HCT116 (cell line): ENCODE measurements at regions of chr17 and their contacts with region 1.

Region 1: GRCh38 chr17:62703775-62704378 is 76.4 kb downstream of the MRC2 start:
- DNase-seq: no peak
- ATAC-seq: peak; percentile 93
- H3K4me3 ChIP-seq: peak overlapping the region; percentile 48 to 63
- H3K27ac ChIP-seq: peak overlapping the region; percentile 39; the same call in 1 of the 2 replicates
- H3K4me1 ChIP-seq: peaks cover 18 to 32% of the 10 kb centered on the region in 2 experiments
- H3K27me3 ChIP-seq: no peaks in the 10 kb centered on the region
- CTCF ChIP-seq: peak; percentile 76 to 94 (median 91)
- POLR2A ChIP-seq: no peak
- RAD21 ChIP-seq: peak; percentile 97

Region 2: GRCh38 chr17:62653826-62654761 is 49.8 kb before region 1 on chr17:
- CTCF ChIA-PET with region 1: no interaction called
- POLR2A ChIA-PET with region 1: no interaction called
- RAD21 ChIA-PET with region 1: no interaction called
- intact Hi-C with region 1: no loop called
- DNase-seq: no peak
- ATAC-seq: no peak
- H3K4me3 ChIP-seq: no peak overlapping the region
- H3K27ac ChIP-seq: no peak overlapping the region
- H3K4me1 ChIP-seq: peaks cover 0 to 7% of the 10 kb centered on the region in 2 experiments; a peak in 1 of 4 replicates
- H3K27me3 ChIP-seq: no peaks in the 10 kb centered on the region
- CTCF ChIP-seq: no peak
- POLR2A ChIP-seq: no peak
- RAD21 ChIP-seq: no peak

Region 3: DNA sequence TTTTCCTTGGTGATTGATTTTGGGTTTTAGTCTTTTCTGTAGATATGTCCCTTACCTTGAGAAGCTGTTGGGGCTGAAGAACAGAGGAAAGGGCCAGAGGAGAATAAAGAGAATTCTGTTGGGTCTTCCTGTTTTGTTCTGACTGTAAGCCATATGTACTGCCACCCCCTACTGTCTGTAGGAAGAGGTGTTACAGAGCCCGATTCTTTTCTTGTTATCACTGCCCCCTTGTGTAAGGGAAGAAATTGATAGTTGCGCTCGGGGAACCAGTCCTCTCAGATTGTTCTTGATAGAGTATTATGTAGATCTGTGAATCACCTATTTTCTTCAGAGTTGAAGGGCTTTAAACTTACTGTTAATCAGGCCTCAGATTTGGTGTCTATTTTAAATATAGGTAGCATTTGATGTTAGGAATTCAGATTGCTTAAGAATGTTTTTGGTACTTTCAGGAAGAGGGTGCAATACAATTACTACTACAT is 264.6 kb after region 1 on chr17:
- CTCF ChIA-PET with region 1: no interaction called
- POLR2A ChIA-PET with region 1: no interaction called
- RAD21 ChIA-PET with region 1: no interaction called
- intact Hi-C with region 1: loop called (anchors 1 kb)
- DNase-seq: peak; percentile 83
- ATAC-seq: peak; percentile 63
- H3K4me3 ChIP-seq: peak overlapping the region in 1 of 2 experiments; percentile 18; a peak in 1 of 4 replicates
- H3K27ac ChIP-seq: no peak overlapping the region
- H3K4me1 ChIP-seq: peaks cover 13 to 38% of the 10 kb centered on the region in 2 experiments
- H3K27me3 ChIP-seq: no peaks in the 10 kb centered on the region
- CTCF ChIP-seq: peak; percentile 97 to 100 (median 99)
- POLR2A ChIP-seq: no peak
- RAD21 ChIP-seq: peak; percentile 99

Region 4: GRCh38 chr17:62995377-62995885 is 291.6 kb after region 1 on chr17:
- CTCF ChIA-PET with region 1: interaction called, 5 read pairs
- POLR2A ChIA-PET with region 1: no interaction called
- RAD21 ChIA-PET with region 1: no interaction called
- intact Hi-C with region 1: loop called (anchors 1 kb)
- DNase-seq: peak; percentile 38
- ATAC-seq: peak; percentile 97
- H3K4me3 ChIP-seq: no peak overlapping the region
- H3K27ac ChIP-seq: no peak overlapping the region
- H3K4me1 ChIP-seq: peaks cover 0 to 4% of the 10 kb centered on the region in 2 experiments; a peak in 1 of 4 replicates
- H3K27me3 ChIP-seq: no peaks in the 10 kb centered on the region
- CTCF ChIP-seq: peak; percentile 71 to 94 (median 89)
- POLR2A ChIP-seq: no peak
- RAD21 ChIP-seq: peak; percentile 87

Region 5: GRCh38 chr17:63082273-63082993 is 378.6 kb after region 1 on chr17:
- CTCF ChIA-PET with region 1: interaction called, 6 read pairs
- POLR2A ChIA-PET with region 1: no interaction called
- RAD21 ChIA-PET with region 1: no interaction called
- intact Hi-C with region 1: loop called (anchors 5 kb)
- DNase-seq: peak; percentile 10
- ATAC-seq: peak; percentile 59
- H3K4me3 ChIP-seq: no peak overlapping the region
- H3K27ac ChIP-seq: no peak overlapping the region
- H3K4me1 ChIP-seq: no peaks in the 10 kb centered on the region
- H3K27me3 ChIP-seq: no peaks in the 10 kb centered on the region
- CTCF ChIP-seq: peak; percentile 54 to 58 (median 55)
- POLR2A ChIP-seq: no peak
- RAD21 ChIP-seq: peak; percentile 74